ENCODE measurements at regions of chr11 and their contacts with region 1.

Region 1: GRCh38 chr11:34492806-34493414 is 20.7 kb downstream of the ELF5 start:
- H3K4me3 ChIP-seq: no peak overlapping the region
- H3K27ac ChIP-seq: no peak overlapping the region
- H3K4me1 ChIP-seq: no peaks in the 10 kb centered on the region
- CTCF ChIP-seq: no peak; the same call in 1 of the 2 replicates

Region 2: GRCh38 chr11:34468209-34468841 is 24.6 kb before region 1 on chr11:
- CTCF ChIA-PET with region 1: interaction called, 11 read pairs
- POLR2A ChIA-PET with region 1: no interaction called
- H3K4me3 ChIP-seq: no peak overlapping the region
- H3K27ac ChIP-seq: no peak overlapping the region
- H3K4me1 ChIP-seq: no peaks in the 10 kb centered on the region
- CTCF ChIP-seq: no peak

Region 3: GRCh38 chr11:34480314-34480713 is 12.6 kb before region 1 on chr11:
- CTCF ChIA-PET with region 1: interaction called, 23 read pairs
- POLR2A ChIA-PET with region 1: no interaction called
- H3K4me3 ChIP-seq: no peak overlapping the region
- H3K27ac ChIP-seq: no peak overlapping the region
- H3K4me1 ChIP-seq: no peaks in the 10 kb centered on the region; the same call in 1 of the 2 replicates
- CTCF ChIP-seq: no peak

Region 4: DNA sequence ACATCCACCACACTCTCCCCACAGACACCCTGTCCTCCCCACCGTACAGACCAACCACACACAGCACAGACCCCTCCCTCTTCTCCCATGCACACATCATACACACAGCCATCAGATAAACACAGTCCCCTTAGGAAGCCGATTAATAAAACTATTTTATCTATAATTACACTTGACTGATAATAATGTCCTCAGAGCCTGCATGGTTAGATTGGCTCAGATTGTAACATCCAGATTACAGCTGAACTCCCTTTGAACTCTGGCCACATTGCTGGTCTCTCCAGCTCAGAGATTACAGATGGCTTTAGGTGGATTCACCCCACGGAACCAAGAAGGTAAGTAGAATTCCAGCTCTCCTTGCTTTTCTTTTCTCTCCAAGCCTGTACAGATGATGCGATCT is 30.2 kb after region 1 on chr11:
- CTCF ChIA-PET with region 1: no interaction called
- POLR2A ChIA-PET with region 1: no interaction called
- H3K4me3 ChIP-seq: no peak overlapping the region
- H3K27ac ChIP-seq: no peak overlapping the region
- H3K4me1 ChIP-seq: no peaks in the 10 kb centered on the region
- CTCF ChIP-seq: no peak

Region 5: DNA sequence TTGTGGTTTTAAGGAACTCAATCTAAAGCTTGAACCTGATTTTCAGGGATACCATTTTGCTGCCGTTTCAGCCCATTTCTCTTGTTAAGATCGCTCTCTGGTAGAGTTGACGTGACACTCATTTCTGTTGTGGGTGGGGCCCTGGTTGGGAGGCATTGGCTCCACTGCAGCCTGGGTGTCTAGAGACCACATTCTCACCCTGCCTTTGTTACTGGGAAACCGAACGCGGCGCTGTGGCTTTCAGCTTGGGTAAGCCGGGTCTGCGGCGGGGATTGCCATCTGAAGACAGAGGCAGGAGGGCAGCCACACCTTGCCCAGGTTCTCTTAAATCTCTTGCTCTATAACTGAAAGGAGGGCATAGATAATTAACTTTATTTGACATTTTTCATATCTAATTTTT is 131.2 kb after region 1 on chr11:
- CTCF ChIA-PET with region 1: no interaction called
- POLR2A ChIA-PET with region 1: no interaction called
- H3K4me3 ChIP-seq: no peak overlapping the region
- H3K27ac ChIP-seq: no peak overlapping the region
- H3K4me1 ChIP-seq: no peaks in the 10 kb centered on the region
- CTCF ChIP-seq: no peak

Measured in HEK293 (cell line).